Prostate gland (tissue), 2 donors: ENCODE measurements at regions of chr17 and their contacts with region 1.

Region 1: DNA sequence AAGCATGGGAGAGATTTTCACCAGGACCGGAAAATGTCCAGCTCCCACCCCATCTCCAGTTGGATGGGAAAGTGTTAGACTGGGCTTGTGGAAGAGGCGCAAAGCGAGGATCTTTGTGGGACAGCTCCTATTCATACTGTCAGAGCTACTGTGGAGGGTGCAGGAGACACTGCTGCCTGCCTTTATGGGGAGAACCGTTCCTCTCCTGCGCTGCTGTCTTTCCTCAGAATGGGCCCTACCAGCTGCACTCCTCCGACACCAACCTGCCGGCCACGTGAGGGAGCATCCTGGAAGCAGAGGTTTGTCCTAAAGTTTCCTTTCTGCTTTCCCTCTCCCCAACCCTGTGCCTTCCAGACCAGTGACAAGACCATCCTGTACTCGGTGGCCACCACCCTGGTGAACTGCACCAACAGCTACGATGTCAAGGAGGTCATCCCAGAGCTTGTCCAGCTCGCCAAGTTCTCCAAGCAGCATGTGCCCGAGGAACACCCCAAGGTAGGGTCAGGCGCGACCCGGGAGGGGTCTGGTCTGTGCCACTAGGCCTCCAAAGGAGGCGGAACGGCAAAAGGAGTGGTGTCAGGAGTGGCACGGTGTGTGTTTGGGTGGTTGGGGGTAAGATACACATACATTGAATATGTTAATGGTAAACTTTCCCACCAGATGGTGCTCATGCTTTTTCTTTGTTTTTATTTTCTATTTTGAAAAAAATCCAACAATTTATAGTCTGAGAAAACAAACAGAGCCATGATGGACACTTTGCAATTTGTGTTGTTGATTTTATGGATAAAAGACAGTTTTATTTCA is 23.0 kb downstream of the SLC35G3 start:
- DNase-seq: no peak
- H3K4me3 ChIP-seq: no peak overlapping the region
- H3K27ac ChIP-seq: no peak overlapping the region
- H3K4me1 ChIP-seq: no peaks in the 10 kb centered on the region
- H3K27me3 ChIP-seq: no peaks in the 10 kb centered on the region
- CTCF ChIP-seq: peak in 2 of 4 experiments; percentile 49 to 55
- POLR2A ChIP-seq: no peak

Region 2: GRCh38 chr17:35218915-35219314 is 47.7 kb after region 1 on chr17:
- intact Hi-C with region 1: no loop called
- DNase-seq: no peak
- H3K4me3 ChIP-seq: no peak overlapping the region
- H3K27ac ChIP-seq: no peak overlapping the region
- H3K4me1 ChIP-seq: no peaks in the 10 kb centered on the region
- H3K27me3 ChIP-seq: no peaks in the 10 kb centered on the region
- CTCF ChIP-seq: no peak
- POLR2A ChIP-seq: no peak

Region 3: GRCh38 chr17:35529866-35530265 is 358.7 kb after region 1 on chr17:
- intact Hi-C with region 1: loop called (anchors 5 kb)
- DNase-seq: no peak
- H3K4me3 ChIP-seq: no peak overlapping the region
- H3K27ac ChIP-seq: no peak overlapping the region
- H3K4me1 ChIP-seq: no peaks in the 10 kb centered on the region
- H3K27me3 ChIP-seq: no peaks in the 10 kb centered on the region
- CTCF ChIP-seq: no peak
- POLR2A ChIP-seq: no peak